ENCODE measurements at regions of chr9 and their contacts with region 1.

Region 1: DNA sequence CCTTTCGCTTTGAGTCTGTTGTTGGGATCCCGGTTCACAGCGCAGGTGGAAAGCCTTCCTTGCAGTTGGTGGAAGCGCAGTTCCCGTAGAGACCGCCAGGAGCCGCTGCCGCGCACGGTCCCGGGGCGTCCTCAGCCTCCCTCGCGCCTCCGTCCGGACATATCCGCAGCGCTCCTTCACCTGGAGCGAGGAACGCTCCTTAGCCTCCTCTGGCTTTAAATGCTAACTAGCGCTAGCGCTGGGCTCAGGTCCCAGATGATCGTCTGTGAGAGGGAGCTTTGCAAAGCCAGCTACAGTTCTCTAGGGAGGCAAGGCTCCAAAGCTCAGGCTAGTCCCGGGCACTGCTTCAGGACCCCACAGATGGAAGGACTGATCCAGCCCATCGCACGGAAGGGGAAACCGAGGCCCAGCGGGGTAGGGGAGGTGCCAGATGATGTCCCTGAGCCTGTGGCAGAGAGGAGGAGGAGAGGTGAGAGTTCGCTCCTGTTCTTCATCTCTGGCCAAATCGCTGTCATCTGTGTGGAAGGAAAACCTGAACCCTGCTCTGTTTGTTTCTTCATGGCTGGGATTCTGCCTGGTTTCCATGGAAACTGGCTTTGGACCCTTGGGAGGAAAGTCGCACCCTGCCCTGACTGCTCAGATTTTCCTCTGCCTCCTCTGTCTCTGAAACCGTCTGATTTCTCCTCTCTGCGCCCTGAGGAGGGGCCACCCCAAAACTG is 31.4 kb downstream of the COL15A1 start:
- DNase-seq: peak; percentile 68
- H3K4me3 ChIP-seq: peak overlapping the region; percentile 36
- H3K27ac ChIP-seq: no peak overlapping the region
- H3K27me3 ChIP-seq: no peaks in the 10 kb centered on the region
- CTCF ChIP-seq: peak; percentile 99

Region 2: DNA sequence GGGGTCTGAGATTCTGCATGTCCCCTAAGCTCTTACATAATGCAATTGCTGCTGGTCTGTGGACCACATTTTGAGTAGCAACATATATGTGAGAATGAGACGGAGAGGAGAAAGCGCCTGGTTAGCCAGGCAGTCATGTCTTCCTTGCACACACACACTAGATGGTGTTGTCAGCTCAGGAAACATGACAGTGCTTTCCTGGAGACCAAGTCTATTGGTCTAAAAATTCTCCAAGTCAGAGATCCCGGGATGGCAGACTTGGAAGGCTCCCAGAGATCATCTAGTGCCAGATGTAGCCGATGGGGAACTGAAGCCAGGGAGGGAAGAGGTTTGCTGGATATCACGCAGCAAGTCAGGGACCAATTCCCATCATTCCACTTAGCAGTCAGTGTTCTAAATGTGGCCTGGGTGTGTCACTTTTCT is 114.3 kb before region 1 on chr9:
- in situ Hi-C with region 1: loop called (anchors 25 kb)
- DNase-seq: peak; percentile 84
- H3K4me3 ChIP-seq: no peak overlapping the region
- H3K27ac ChIP-seq: no peak overlapping the region
- H3K27me3 ChIP-seq: no peaks in the 10 kb centered on the region
- CTCF ChIP-seq: peak; percentile 79

Region 3: GRCh38 chr9:99150451-99151171 is 175.5 kb after region 1 on chr9:
- in situ Hi-C with region 1: no loop called
- DNase-seq: no peak
- H3K4me3 ChIP-seq: no peak overlapping the region
- H3K27ac ChIP-seq: no peak overlapping the region
- H3K27me3 ChIP-seq: no peaks in the 10 kb centered on the region
- CTCF ChIP-seq: no peak

Region 4: GRCh38 chr9:99433555-99433954 is 458.4 kb after region 1 on chr9:
- in situ Hi-C with region 1: no loop called
- DNase-seq: peak; percentile 80
- H3K4me3 ChIP-seq: no peak overlapping the region
- H3K27ac ChIP-seq: peak overlapping the region; percentile 27
- H3K27me3 ChIP-seq: no peaks in the 10 kb centered on the region
- CTCF ChIP-seq: no peak

Measured in brain microvascular endothelial cell (primary cell).